ENCODE measurements at regions of chr1 and their contacts with region 1.

Region 1: GRCh38 chr1:247681288-247681897 is 1.9 kb upstream of the OR13G1 start:
- DNase-seq: peak; percentile 82
- H3K4me3 Mint-ChIP-seq: no peak overlapping the region
- H3K27ac Mint-ChIP-seq: no peak overlapping the region
- H3K4me1 Mint-ChIP-seq: peaks cover 6% of the 10 kb centered on the region
- H3K27me3 Mint-ChIP-seq: no peaks in the 10 kb centered on the region
- CTCF ChIP-seq: peak; percentile 99

Region 2: DNA sequence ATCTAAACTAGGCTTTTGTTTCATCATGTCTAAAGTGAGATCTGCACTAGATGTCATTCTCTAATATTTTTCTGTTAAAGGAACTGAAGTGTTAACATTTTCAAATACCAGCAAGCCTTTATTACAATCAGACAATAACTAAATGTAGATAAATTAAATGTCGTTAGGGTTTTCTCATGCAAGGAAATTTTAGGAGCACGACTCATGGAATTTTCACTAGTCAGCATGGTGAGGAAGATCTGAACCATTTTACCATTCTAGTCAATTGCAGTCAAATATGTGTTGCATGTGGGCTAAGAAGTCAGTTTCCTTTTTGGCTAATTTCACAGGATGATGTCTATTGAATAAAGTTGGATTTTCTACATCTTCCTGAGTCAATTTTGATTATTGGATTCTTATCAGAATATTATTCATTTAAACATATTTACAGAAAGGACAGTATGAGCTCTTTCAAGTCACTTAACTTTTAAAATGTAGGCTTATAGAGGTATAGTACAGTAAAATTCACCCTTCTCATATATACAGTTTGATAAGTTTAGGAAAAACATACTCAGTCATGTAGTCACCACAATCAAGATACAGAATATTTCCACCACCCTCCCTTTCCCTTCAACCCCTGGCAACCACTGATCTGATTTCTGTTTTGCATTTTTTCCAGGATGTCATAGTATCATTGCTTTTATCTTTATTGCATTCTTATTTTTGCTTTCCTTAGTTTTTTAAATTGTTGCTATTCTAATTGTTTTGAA is 123.3 kb before region 1 on chr1:
- CTCF ChIA-PET with region 1: no interaction called
- POLR2A ChIA-PET with region 1: no interaction called
- intact Hi-C with region 1: no loop called
- DNase-seq: no peak
- H3K4me3 Mint-ChIP-seq: no peak overlapping the region
- H3K27ac Mint-ChIP-seq: no peak overlapping the region
- H3K4me1 Mint-ChIP-seq: no peaks in the 10 kb centered on the region
- H3K27me3 Mint-ChIP-seq: no peaks in the 10 kb centered on the region
- CTCF ChIP-seq: no peak

Region 3: DNA sequence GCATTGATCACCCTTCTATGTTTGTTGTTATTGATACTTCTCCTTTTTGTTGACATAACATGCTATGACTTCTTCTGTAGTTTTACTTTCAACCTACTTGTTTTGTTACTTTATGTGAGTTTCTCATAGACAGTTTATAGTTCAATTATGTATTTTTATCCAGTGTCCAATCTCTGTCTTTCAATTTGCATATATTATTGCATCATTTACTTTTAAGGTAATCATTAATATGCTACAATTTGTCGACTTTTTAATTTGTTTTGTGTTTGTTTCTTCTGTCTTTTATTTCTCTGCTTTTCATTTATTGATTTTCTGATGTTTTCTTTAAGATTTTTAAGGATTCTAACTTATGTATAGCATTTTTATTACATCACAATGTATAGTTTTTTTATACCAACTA is 12.2 kb before region 1 on chr1:
- CTCF ChIA-PET with region 1: interaction called, 24 read pairs
- POLR2A ChIA-PET with region 1: no interaction called
- intact Hi-C with region 1: no loop called
- DNase-seq: no peak
- H3K4me3 Mint-ChIP-seq: no peak overlapping the region
- H3K27ac Mint-ChIP-seq: no peak overlapping the region
- H3K4me1 Mint-ChIP-seq: no peaks in the 10 kb centered on the region
- H3K27me3 Mint-ChIP-seq: no peaks in the 10 kb centered on the region
- CTCF ChIP-seq: no peak

Region 4: GRCh38 chr1:247701338-247701737 is 19.9 kb after region 1 on chr1:
- CTCF ChIA-PET with region 1: interaction called, 18 read pairs
- POLR2A ChIA-PET with region 1: interaction called, 3 read pairs
- intact Hi-C with region 1: no loop called
- DNase-seq: no peak
- H3K4me3 Mint-ChIP-seq: no peak overlapping the region
- H3K27ac Mint-ChIP-seq: no peak overlapping the region
- H3K4me1 Mint-ChIP-seq: peaks cover 5% of the 10 kb centered on the region
- H3K27me3 Mint-ChIP-seq: no peaks in the 10 kb centered on the region
- CTCF ChIP-seq: no peak

Region 5: GRCh38 chr1:247906504-247907047 is 225.2 kb after region 1 on chr1:
- CTCF ChIA-PET with region 1: interaction called, 4 read pairs
- POLR2A ChIA-PET with region 1: no interaction called
- intact Hi-C with region 1: loop called (anchors 1 kb)
- DNase-seq: peak; percentile 79
- H3K4me3 Mint-ChIP-seq: peak overlapping the region; percentile 79
- H3K27ac Mint-ChIP-seq: peak overlapping the region; percentile 99
- H3K4me1 Mint-ChIP-seq: peaks cover 20% of the 10 kb centered on the region
- H3K27me3 Mint-ChIP-seq: no peaks in the 10 kb centered on the region
- CTCF ChIP-seq: no peak

Region 6: DNA sequence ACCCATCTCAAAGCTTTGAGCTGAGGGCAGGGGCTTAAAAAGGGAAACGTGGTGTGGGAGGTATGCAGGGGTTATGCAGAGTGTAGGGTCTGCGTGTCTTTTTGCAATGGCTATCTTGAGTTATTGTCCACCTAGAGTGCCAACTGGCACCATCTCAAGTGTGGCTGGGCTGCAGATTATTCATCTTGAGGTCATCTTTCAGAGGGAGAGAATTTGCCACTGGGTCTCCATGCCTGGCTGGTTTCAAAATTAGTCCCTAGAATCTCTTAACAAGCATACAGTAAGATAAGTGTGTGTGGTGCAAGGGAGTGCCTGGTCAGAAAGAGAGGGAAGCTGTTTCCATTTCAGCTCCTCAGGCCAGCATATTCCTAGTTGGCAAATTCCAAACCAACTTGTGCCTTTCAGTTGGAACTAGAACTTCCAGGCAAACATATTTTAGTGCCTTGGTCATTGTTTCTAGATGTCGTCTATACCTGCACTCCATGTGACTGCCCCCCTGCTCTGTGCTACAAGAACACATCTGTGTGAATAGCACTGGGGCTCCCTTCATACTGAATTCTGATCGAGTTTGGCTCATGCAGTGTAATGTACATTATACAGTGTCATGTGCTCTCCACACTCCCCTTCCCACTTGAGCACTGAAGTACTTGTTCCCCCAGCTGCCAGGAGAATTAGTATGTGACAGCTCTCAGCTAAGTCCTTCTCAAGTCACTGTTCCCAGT is 233.7 kb after region 1 on chr1:
- CTCF ChIA-PET with region 1: interaction called, 7 read pairs
- POLR2A ChIA-PET with region 1: no interaction called
- intact Hi-C with region 1: loop called (anchors 1 kb)
- DNase-seq: peak; percentile 47
- H3K4me3 Mint-ChIP-seq: no peak overlapping the region
- H3K27ac Mint-ChIP-seq: peak overlapping the region; percentile 3
- H3K4me1 Mint-ChIP-seq: peaks cover 24% of the 10 kb centered on the region
- H3K27me3 Mint-ChIP-seq: no peaks in the 10 kb centered on the region
- CTCF ChIP-seq: no peak

Region 7: DNA sequence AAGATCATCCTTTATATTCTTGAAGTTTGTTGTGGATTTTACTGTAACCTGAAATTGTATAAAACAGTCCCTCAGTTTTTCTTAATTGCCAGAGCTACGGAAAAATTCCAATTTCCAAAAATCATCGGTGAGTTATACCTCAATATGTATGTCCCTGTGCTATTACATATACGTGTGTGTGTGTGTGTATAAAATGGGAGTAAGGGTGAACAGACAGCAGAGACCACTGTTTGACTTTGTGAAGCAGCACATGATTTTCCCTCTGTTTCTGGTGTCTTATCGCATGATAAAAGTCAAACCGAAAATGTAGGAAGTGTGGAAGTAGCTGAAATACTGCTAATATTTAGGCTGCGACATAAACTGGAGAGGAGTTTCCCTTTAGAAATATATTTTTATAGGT is 722.6 kb after region 1 on chr1:
- CTCF ChIA-PET with region 1: interaction called, 5 read pairs
- POLR2A ChIA-PET with region 1: no interaction called
- intact Hi-C with region 1: loop called (anchors 5 kb)
- DNase-seq: peak; percentile 27
- H3K4me3 Mint-ChIP-seq: no peak overlapping the region
- H3K27ac Mint-ChIP-seq: no peak overlapping the region
- H3K4me1 Mint-ChIP-seq: peaks cover 5% of the 10 kb centered on the region
- H3K27me3 Mint-ChIP-seq: no peaks in the 10 kb centered on the region
- CTCF ChIP-seq: no peak